K562 (cell line): ENCODE measurements at regions of chr1 and their contacts with region 1.

Region 1: DNA sequence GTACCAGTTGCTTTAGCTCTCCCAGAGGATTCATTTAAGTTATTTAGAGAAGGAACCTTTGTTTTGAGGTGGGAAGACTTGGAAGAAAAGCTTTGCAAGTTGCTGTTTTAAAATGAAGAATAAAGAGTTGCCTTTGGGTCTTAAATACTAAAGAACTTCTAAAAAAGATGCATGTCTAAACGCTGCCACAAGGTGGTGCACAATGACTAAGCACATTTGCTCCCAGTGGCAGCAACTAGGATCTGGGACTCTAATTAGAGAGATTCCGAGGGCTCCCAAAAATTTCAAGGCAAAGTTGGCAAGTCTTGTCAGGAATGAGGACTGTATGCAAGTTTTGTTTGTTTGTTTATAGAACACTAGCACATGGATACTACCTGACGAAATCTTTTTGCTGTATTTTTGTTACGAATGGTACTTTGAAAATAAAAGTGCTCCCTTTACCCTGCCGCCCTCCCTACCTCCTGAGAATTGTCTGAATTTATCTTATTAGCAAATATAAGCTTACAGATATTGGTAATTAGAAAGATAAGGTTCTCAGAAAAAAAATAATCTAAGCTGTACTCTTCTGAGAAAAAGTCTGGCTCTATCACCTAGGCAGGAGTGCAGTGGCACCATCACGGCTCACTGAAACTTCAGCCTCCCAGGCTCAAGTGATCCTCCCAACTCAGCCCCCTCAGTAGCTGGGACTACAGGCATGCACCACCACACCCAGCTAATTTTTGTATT is 121.8 kb downstream of the HFM1 start:
- DNase-seq: peak; percentile 59 to 79 (median 62)
- ATAC-seq: peak; percentile 84
- H3K4me3 ChIP-seq: no peak overlapping the region
- H3K27ac ChIP-seq: no peak overlapping the region
- H3K4me1 ChIP-seq: peaks cover 0 to 5% of the 10 kb centered on the region in 2 experiments; a peak in 2 of 5 replicates
- H3K27me3 ChIP-seq: no peaks in the 10 kb centered on the region
- CTCF ChIP-seq: peak; percentile 70 to 88 (median 79)
- EP300 ChIP-seq: no peak
- POLR2A ChIP-seq: no peak
- RAD21 ChIP-seq: peak; percentile 91 to 92

Region 2: DNA sequence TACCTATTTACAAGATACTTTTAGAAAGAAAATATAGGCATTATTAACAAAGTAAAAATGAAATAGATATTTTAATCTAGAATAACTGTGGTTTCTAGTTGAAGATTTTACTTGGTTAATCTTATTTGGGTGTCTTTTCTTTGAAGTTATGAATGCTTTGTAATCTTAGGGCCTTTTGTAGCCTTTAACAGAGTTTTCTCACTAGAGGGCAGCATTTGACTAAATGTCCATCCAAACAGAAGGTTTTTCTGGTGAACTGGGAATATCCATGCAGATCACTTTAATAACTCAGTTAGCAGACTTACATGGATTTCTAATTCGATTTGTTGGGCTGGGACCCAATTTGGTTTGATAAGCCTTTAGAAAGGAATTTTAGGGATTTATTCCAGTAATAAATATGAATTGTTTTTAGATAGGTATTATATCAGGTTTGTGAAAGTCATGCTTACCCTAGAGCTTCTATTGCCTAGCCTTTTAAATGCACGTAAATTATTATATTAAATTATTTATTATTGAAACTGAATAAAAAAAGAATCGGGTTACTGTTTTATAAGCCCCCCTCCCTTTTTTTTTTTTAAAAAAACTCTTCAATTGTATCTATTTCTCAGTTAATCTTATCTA is 1168.2 kb before region 1 on chr1:
- CTCF ChIA-PET with region 1: no interaction called
- POLR2A ChIA-PET with region 1: no interaction called
- in situ Hi-C with region 1: no loop called
- intact Hi-C with region 1: loop called (anchors 10 kb)
- DNase-seq: peak; percentile 27 to 60 (median 38)
- ATAC-seq: peak; percentile 74
- H3K4me3 ChIP-seq: no peak overlapping the region
- H3K27ac ChIP-seq: no peak overlapping the region
- H3K4me1 ChIP-seq: no peaks in the 10 kb centered on the region
- H3K27me3 ChIP-seq: no peaks in the 10 kb centered on the region; a peak in 1 of 5 replicates
- CTCF ChIP-seq: peak; percentile 51 to 76 (median 55); a peak in 5 of 6 replicates
- EP300 ChIP-seq: no peak
- POLR2A ChIP-seq: no peak
- RAD21 ChIP-seq: peak; percentile 73 to 88

Region 3: DNA sequence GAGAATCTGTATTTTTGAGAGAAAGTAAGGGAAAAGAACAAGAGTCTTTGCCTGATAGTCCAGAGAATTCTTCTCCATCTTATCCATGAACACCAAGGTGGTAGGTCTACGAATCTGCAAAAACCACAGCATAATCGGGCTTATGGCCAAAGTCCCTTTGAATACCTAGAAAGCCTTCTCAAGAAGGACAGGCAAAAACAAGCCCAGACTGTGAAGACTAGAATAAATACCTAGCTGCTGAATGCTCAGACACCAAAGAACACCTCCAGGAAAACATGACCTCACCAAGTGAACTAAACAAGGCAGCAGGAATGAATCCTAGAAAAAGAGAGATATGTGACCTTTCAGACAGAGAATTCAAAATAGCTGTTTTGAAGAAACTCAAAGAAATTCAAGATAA is 42.6 kb after region 1 on chr1:
- CTCF ChIA-PET with region 1: no interaction called
- POLR2A ChIA-PET with region 1: no interaction called
- in situ Hi-C with region 1: no loop called
- intact Hi-C with region 1: no loop called
- DNase-seq: no peak
- ATAC-seq: no peak
- H3K4me3 ChIP-seq: no peak overlapping the region
- H3K27ac ChIP-seq: no peak overlapping the region
- H3K4me1 ChIP-seq: no peaks in the 10 kb centered on the region
- H3K27me3 ChIP-seq: no peaks in the 10 kb centered on the region
- CTCF ChIP-seq: no peak
- EP300 ChIP-seq: no peak
- POLR2A ChIP-seq: no peak
- RAD21 ChIP-seq: no peak

Region 4: DNA sequence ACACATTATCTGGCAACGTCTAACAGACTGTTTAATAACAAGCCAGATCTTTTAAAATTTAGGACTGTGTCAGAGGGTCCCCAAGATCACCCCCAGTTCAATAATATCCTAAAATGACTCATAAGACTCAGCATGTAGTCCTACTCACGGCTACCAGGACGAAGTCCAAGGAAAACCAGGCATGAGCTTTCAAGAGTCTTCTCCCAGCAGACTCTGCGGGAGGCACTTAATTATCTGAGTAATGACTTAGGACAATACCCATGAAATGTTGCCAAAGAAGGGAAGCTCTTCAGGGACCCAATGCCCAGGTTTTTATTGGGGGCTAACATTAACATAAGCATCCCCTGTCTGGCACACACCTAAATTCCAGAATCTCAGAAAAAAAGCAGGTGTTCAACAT is 114.7 kb after region 1 on chr1:
- CTCF ChIA-PET with region 1: interaction called, 32 read pairs
- POLR2A ChIA-PET with region 1: no interaction called
- in situ Hi-C with region 1: loop called (anchors 5 kb)
- intact Hi-C with region 1: loop called (anchors 1 kb)
- DNase-seq: no peak
- ATAC-seq: no peak
- H3K4me3 ChIP-seq: no peak overlapping the region
- H3K27ac ChIP-seq: no peak overlapping the region
- H3K4me1 ChIP-seq: 0 out of 5 replicates have a peak, but pooled peaks cover 0 to 3% of the 10 kb centered on the region in 2 experiments
- H3K27me3 ChIP-seq: no peaks in the 10 kb centered on the region
- CTCF ChIP-seq: no peak
- EP300 ChIP-seq: no peak
- POLR2A ChIP-seq: no peak
- RAD21 ChIP-seq: no peak

Region 5: GRCh38 chr1:91404151-91405012 is 121.5 kb after region 1 on chr1 and contains the start of gene HFM1:
- CTCF ChIA-PET with region 1: interaction called, 32 read pairs
- POLR2A ChIA-PET with region 1: no interaction called
- in situ Hi-C with region 1: loop called (anchors 5 kb)
- intact Hi-C with region 1: loop called (anchors 1 kb)
- DNase-seq: peak; percentile 85 to 95 (median 89)
- ATAC-seq: peak; percentile 98
- H3K4me3 ChIP-seq: peak within 1 kb of the TSS; percentile 76
- H3K27ac ChIP-seq: peak within 1 kb of the TSS; percentile 84
- H3K4me1 ChIP-seq: peaks cover 6 to 10% of the 10 kb centered on the region in 2 experiments; a peak in 3 of 5 replicates
- H3K27me3 ChIP-seq: no peaks in the 10 kb centered on the region
- CTCF ChIP-seq: peak in 2 of 3 experiments; percentile 20 to 29; a peak in 2 of 6 replicates
- EP300 ChIP-seq: peak; percentile 1; the same call in 1 of the 2 replicates
- POLR2A ChIP-seq: peak; percentile 96
- RAD21 ChIP-seq: no peak
- polyA plus RNA-seq, gene HFM1: 1.5 to 2.3 TPM

Region 6: GRCh38 chr1:91500756-91501522 is 218.1 kb after region 1 on chr1 and contains the start of gene CDC7:
- CTCF ChIA-PET with region 1: interaction called, 5 read pairs
- POLR2A ChIA-PET with region 1: interaction called, 3 read pairs
- in situ Hi-C with region 1: no loop called
- intact Hi-C with region 1: loop called (anchors 5 kb)
- DNase-seq: peak; percentile 95 to 97 (median 96)
- ATAC-seq: peak; percentile 83
- H3K4me3 ChIP-seq: peak within 1 kb of the TSS; percentile 56
- H3K27ac ChIP-seq: peak within 1 kb of the TSS; percentile 97
- H3K4me1 ChIP-seq: peaks cover 0 to 43% of the 10 kb centered on the region in 2 experiments
- H3K27me3 ChIP-seq: no peaks in the 10 kb centered on the region
- CTCF ChIP-seq: peak; percentile 51 to 59 (median 55); a peak in 5 of 6 replicates
- EP300 ChIP-seq: peak; percentile 2; the same call in 1 of the 2 replicates
- POLR2A ChIP-seq: peak; percentile 92
- RAD21 ChIP-seq: peak; percentile 24 to 28
- polyA plus RNA-seq, gene CDC7: 22.3 to 66.8 TPM

Region 7: DNA sequence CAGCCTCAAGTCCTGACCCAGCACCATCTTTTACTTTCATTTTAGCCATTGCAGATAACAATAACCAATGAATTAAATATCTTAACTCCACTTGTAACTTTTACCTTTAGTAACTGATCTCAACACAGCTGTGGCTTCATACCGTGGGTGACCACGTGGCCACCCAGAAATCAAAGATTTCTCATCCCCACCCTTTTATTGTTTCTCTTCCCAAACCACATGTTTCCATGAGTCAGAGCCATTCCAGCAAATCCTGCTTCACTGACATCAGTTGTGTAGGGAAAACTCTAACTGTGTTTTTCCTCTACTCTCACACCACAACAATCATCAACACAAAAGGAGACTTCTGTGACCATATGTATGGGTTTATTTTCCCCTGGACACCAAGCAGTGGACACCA is 641.3 kb after region 1 on chr1:
- CTCF ChIA-PET with region 1: no interaction called
- POLR2A ChIA-PET with region 1: no interaction called
- in situ Hi-C with region 1: loop called (anchors 5 kb)
- intact Hi-C with region 1: loop called (anchors 1 kb)
- DNase-seq: no peak
- ATAC-seq: no peak
- H3K4me3 ChIP-seq: no peak overlapping the region
- H3K27ac ChIP-seq: no peak overlapping the region
- H3K4me1 ChIP-seq: no peaks in the 10 kb centered on the region
- H3K27me3 ChIP-seq: no peaks in the 10 kb centered on the region
- CTCF ChIP-seq: no peak
- EP300 ChIP-seq: no peak
- POLR2A ChIP-seq: no peak
- RAD21 ChIP-seq: no peak

Region 8: GRCh38 chr1:91929250-91929649 is 646.4 kb after region 1 on chr1:
- CTCF ChIA-PET with region 1: no interaction called
- POLR2A ChIA-PET with region 1: no interaction called
- in situ Hi-C with region 1: loop called (anchors 5 kb)
- intact Hi-C with region 1: loop called (anchors 1 kb)
- DNase-seq: no peak
- ATAC-seq: no peak
- H3K4me3 ChIP-seq: no peak overlapping the region
- H3K27ac ChIP-seq: no peak overlapping the region
- H3K4me1 ChIP-seq: no peaks in the 10 kb centered on the region
- H3K27me3 ChIP-seq: no peaks in the 10 kb centered on the region
- CTCF ChIP-seq: no peak
- EP300 ChIP-seq: no peak
- POLR2A ChIP-seq: no peak
- RAD21 ChIP-seq: no peak